CD8-positive, alpha-beta memory T cell (primary cell): ENCODE measurements at regions of chr2 and their contacts with region 1.

Region 1: DNA sequence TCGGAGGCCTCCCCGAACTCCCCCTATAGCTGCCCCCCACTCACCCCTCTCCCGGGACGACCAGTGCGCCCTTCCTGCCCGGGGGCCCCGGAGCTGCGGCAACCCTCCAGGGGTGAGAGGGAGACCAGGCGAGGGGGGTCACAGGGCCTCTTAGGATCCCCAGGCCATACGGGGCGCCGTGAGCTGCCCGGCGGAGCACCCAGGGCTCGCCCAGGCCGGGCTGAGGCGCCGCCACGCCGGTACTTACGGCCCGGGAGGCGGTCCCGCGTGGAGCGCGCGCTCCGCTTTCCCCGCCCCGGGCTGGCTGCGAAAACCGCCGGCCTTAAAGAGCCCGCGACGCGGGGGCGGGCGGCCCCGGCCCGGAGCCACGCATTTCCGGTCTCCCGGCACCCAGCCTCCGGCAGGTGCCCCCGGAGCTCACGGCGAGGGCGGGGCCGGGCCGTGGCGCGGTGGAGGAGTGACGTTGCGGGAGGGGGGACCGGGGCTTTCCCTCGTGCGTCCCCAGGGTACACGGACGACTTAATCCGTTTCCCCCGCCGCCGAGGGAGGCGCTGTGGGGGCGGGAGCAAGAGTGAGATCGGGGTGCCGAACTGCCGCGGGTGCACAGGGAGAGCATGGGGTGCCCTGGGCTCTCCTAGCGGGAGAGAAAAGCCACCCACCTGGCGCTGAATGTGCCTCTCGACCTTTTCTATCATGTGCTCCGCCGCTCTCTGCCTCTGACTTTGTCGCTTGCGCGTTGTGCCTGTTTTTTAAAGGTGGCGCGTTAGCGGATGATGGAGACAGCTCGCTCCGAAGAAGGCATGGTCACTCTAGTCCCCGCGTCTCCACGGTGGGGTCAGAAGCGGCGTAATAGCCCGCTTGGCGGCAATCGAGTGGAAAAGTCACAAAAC is at the start of gene METTL21A:
- DNase-seq: peak; percentile 90 to 97 (median 96)
- H3K4me3 ChIP-seq: peak within 1 kb of the TSS; percentile 98
- H3K4me3 Mint-ChIP-seq: peak within 1 kb of the TSS; percentile 93 to 100 (median 96)
- H3K27ac ChIP-seq: peak within 1 kb of the TSS; percentile 95
- H3K27ac Mint-ChIP-seq: peak within 1 kb of the TSS; percentile 93 to 99 (median 96)
- H3K4me1 ChIP-seq: peaks cover 26% of the 10 kb centered on the region
- H3K4me1 Mint-ChIP-seq: peaks cover 28 to 48% (median 35%) of the 10 kb centered on the region in 3 donors
- H3K27me3 ChIP-seq: no peaks in the 10 kb centered on the region
- H3K27me3 Mint-ChIP-seq: peaks cover 0 to 3% of the 10 kb centered on the region in 2 donors
- total RNA-seq, gene METTL21A: 31.5 to 32.8 TPM

Region 2: DNA sequence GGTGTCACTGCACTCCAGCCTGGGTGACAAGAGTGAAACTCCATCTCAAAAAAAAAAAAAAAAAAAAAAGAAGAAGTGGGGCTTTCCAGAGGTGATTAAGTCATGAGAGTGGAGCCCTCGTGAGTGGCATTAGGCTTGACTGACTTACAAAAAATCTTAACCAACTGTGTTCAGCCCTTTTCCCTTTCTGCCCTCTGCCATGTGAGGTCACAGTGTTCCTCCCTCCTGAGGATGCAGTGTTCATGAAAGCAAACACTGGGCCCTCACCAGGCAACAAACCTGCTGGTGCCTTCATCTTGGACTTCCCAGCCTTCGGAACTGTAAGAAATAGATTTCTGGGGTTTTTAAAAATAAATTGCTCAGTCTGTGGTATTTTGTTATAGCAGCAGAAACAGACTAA is 36.9 kb after region 1 on chr2:
- CTCF ChIA-PET with region 1: no interaction called
- POLR2A ChIA-PET with region 1: no interaction called
- DNase-seq: no peak
- H3K4me3 ChIP-seq: no peak overlapping the region
- H3K4me3 Mint-ChIP-seq: no peak overlapping the region
- H3K27ac ChIP-seq: no peak overlapping the region
- H3K27ac Mint-ChIP-seq: peak overlapping the region in 2 of 8 donors; percentile 57 to 75
- H3K4me1 ChIP-seq: no peaks in the 10 kb centered on the region
- H3K4me1 Mint-ChIP-seq: no peaks in the 10 kb centered on the region
- H3K27me3 ChIP-seq: no peaks in the 10 kb centered on the region
- H3K27me3 Mint-ChIP-seq: peaks cover 0 to 7% of the 10 kb centered on the region in 2 donors

Region 3: DNA sequence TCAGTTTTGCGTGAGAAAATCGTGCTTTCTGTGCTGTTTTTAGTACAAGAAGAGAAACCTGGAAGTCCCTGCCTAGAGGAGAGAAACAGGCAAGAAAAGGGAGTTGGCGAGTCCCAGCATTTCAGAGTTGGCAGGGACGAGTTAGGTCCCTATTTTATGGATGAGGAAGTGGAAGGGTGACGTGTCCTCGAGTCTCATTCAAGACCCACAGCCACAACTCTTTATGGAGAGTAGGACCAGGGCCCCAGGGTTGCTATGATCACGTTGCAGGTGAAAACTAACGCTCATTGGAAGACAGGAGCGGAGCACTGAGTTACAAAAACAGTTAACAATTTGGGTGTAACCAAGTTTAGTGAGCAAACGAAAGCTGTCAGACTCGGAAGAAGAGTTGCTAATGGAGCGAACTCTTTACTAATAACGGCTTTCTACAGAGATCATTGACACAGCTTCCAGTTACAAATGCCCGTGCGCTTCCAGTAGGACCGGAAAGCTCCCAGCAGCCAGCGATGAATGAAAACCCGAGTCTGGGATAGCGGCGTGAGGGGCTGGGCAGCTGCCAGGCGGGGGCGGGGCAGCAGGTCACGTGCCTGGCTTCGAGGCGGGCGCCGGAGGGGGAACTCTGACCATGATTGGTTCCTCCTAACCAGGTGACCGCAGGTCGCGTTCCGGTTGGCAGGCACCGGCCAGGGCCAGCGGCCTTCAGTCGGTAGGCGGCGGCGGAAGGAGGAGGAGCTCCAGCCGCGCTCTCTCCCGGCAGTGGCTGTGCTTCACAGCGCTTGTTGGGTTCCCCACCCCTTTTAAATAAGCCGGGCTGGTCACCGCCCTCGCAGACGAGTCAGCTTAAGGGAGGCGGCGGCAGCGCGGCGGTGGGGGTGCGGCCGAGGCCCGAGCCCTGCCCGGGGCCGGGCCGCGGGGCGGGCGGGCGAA is 85.8 kb after region 1 on chr2 and contains the start of gene CCNYL1:
- CTCF ChIA-PET with region 1: interaction called, 16 read pairs
- POLR2A ChIA-PET with region 1: interaction called, 23 read pairs
- DNase-seq: peak; percentile 97 to 99 (median 98)
- H3K4me3 ChIP-seq: peak within 1 kb of the TSS; percentile 95
- H3K4me3 Mint-ChIP-seq: peak within 1 kb of the TSS; percentile 89 to 98 (median 97)
- H3K27ac ChIP-seq: peak within 1 kb of the TSS; percentile 75
- H3K27ac Mint-ChIP-seq: peak within 1 kb of the TSS; percentile 66 to 97 (median 92)
- H3K4me1 ChIP-seq: peaks cover 13% of the 10 kb centered on the region
- H3K4me1 Mint-ChIP-seq: peaks cover 18 to 30% (median 28%) of the 10 kb centered on the region in 3 donors
- H3K27me3 ChIP-seq: no peaks in the 10 kb centered on the region
- H3K27me3 Mint-ChIP-seq: peaks cover 0 to 2% of the 10 kb centered on the region in 2 donors
- total RNA-seq, gene CCNYL1: 6.1 to 7.2 TPM

Region 4: DNA sequence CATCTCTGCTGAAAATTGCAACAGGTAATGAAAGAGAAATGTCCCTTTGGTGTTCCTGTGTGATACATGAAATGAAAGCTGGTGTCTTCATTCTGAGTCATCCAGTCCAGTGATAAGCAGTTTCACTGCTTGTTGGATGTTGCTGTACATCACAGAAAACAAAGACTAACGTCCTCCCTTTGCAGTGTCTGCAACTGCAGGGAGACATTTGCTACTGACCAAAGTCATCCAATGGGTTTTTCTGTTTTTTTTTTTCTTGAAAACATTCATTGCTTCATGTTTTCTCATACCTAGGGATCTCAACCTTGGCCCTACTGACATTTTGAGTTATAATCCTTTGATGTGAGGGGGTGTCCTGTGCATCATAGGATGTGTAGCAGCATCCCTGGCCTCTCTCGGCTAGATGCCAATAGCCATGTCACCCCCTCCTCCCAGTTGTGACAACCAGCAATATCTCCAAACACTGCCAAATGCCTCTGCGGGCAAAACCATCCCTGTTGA is 208.0 kb after region 1 on chr2:
- CTCF ChIA-PET with region 1: no interaction called
- POLR2A ChIA-PET with region 1: no interaction called
- DNase-seq: no peak
- H3K4me3 ChIP-seq: no peak overlapping the region
- H3K4me3 Mint-ChIP-seq: no peak overlapping the region
- H3K27ac ChIP-seq: no peak overlapping the region
- H3K27ac Mint-ChIP-seq: peak overlapping the region in 1 of 8 donors; percentile 61
- H3K4me1 ChIP-seq: no peaks in the 10 kb centered on the region
- H3K4me1 Mint-ChIP-seq: peaks cover 0 to 7% (median 0%) of the 10 kb centered on the region in 3 donors
- H3K27me3 ChIP-seq: no peaks in the 10 kb centered on the region
- H3K27me3 Mint-ChIP-seq: no peaks in the 10 kb centered on the region